ENCODE measurements at regions of chr12 and their contacts with region 1.

Region 1: GRCh38 chr12:51980051-51980808 is 26.5 kb upstream of the TAMALIN start:
- DNase-seq: peak in 1 of 2 donors; percentile 84
- H3K4me3 ChIP-seq: no peak overlapping the region
- H3K27ac ChIP-seq: no peak overlapping the region
- H3K4me1 ChIP-seq: peaks cover 0 to 6% of the 10 kb centered on the region in 2 donors
- H3K27me3 ChIP-seq: no peaks in the 10 kb centered on the region
- CTCF ChIP-seq: peak; percentile 86 to 94 (median 91)

Region 2: DNA sequence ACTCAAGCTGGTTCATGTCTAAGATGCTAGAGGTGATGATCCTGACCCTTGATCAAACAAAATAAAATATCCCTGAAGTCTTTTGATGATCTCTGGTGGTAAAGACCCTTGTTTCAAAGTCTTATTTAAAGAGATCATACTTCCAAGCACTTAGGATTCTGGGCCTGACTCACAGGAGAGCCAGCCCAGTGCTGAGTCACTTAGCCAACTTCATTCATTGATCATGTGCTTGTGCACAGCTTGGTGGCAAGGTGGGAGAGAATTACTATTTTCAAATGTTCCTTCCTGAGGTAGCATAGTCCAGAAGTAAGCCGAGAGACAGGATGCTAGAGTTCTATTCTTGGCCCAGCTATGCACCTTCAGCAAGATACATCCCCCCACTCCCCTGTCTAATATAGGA is 348.6 kb before region 1 on chr12:
- intact Hi-C with region 1: no loop called
- DNase-seq: no peak
- H3K4me3 ChIP-seq: no peak overlapping the region
- H3K27ac ChIP-seq: no peak overlapping the region
- H3K4me1 ChIP-seq: no peaks in the 10 kb centered on the region
- H3K27me3 ChIP-seq: no peaks in the 10 kb centered on the region
- CTCF ChIP-seq: no peak

Region 3: DNA sequence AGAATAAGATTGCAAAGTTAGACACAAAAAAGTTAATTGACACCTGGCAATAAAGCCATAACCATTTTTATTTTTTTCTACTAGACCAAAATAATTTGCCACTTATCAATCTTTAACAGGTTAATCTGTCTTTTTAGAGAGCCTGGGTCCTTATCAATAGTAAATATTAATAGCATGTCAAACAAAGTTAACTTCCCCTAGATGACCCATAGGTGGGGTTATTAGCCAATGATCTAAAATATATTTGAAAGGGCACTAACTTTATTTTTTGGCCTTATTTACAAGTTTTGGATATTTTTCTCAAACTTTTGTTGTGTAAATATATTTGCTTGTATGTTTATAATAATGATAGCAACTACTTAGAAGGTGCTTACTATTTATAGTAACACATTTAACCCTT is 88.4 kb before region 1 on chr12:
- intact Hi-C with region 1: loop called (anchors 1 kb)
- DNase-seq: no peak
- H3K4me3 ChIP-seq: no peak overlapping the region
- H3K27ac ChIP-seq: no peak overlapping the region
- H3K4me1 ChIP-seq: no peaks in the 10 kb centered on the region
- H3K27me3 ChIP-seq: no peaks in the 10 kb centered on the region
- CTCF ChIP-seq: peak in 2 of 3 experiments; percentile 19 to 31

Region 4: GRCh38 chr12:51923501-51924271 is 56.5 kb before region 1 on chr12:
- intact Hi-C with region 1: loop called (anchors 2 kb)
- DNase-seq: peak in 1 of 2 donors; percentile 72
- H3K4me3 ChIP-seq: no peak overlapping the region
- H3K27ac ChIP-seq: peak overlapping the region in 1 of 2 donors; percentile 56
- H3K4me1 ChIP-seq: peaks cover 0 to 3% of the 10 kb centered on the region in 2 donors
- H3K27me3 ChIP-seq: no peaks in the 10 kb centered on the region
- CTCF ChIP-seq: peak; percentile 66 to 79 (median 69)